GM12878 (cell line): ENCODE measurements at regions of chr5 and their contacts with region 1.

Region 1: DNA sequence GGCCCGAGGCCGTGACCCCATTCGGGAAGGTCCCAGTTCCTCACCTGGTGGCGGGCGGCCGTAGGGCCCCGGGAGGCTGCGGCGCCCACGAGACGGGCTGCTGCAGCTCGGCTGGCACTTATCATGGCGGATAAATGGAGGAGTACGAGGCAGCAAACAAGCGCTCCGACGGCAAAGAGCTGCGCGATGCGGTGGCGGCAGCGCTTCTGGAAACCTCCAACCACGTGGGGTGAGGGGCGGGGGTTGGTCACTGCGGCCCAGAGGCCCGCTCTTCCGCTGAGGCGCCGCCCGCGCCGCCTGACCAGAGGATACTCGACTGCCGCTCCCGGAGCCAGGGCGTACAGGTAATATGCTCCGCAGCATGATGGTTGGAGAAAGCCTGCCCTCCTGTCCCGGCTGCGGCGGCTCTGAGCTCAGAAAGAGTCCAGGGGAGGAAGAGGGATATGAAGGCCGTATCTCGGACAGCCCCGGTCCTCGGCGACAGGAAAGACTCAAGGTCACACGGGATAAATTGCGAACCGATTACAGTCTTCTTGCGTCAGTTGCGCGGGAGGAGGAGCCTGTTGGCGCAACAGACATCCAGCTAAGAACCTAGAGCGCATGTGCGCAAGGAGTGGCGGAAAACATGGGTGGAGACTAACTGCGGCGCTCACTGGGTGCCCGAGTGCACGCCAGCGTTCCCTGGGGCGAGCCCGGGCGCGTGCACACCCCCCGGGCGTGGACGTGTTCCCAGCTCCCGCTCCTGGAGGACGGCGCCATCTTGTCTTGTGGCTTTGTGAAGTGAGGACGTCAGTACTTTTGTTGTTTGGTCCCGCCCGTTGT is at the start of gene HSPA9:
- DNase-seq: peak; percentile 99
- ATAC-seq: peak; percentile 92
- H3K4me3 ChIP-seq: peak within 1 kb of the TSS; percentile 85
- H3K27ac ChIP-seq: peak within 1 kb of the TSS; percentile 97
- H3K4me1 ChIP-seq: no peaks in the 10 kb centered on the region
- H3K27me3 ChIP-seq: no peaks in the 10 kb centered on the region
- CTCF ChIP-seq: no peak
- EP300 ChIP-seq: no peak; a peak in 1 of 4 replicates
- POLR2A ChIP-seq: peak; percentile 90
- RAD21 ChIP-seq: no peak
- polyA plus RNA-seq, gene HSPA9: 145 to 294 TPM

Region 2: GRCh38 chr5:138352071-138352721 is 223.2 kb before region 1 on chr5 and contains the start of gene KDM3B:
- CTCF ChIA-PET with region 1: interaction called, 10 read pairs
- POLR2A ChIA-PET with region 1: interaction called, 3 read pairs
- RAD21 ChIA-PET with region 1: interaction called, 3 read pairs
- SMC1A ChIA-PET with region 1: no interaction called
- in situ Hi-C with region 1: no loop called
- intact Hi-C with region 1: no loop called
- DNase-seq: peak; percentile 55
- ATAC-seq: peak; percentile 77
- H3K4me3 ChIP-seq: peak within 1 kb of the TSS; percentile 99
- H3K27ac ChIP-seq: peak within 1 kb of the TSS; percentile 93
- H3K4me1 ChIP-seq: peaks cover 3% of the 10 kb centered on the region
- H3K27me3 ChIP-seq: no peaks in the 10 kb centered on the region
- CTCF ChIP-seq: peak; percentile 99 to 100 (median 99)
- EP300 ChIP-seq: no peak
- POLR2A ChIP-seq: no peak
- RAD21 ChIP-seq: peak; percentile 53
- polyA plus RNA-seq, gene KDM3B: 8.5 to 9.6 TPM

Region 3: DNA sequence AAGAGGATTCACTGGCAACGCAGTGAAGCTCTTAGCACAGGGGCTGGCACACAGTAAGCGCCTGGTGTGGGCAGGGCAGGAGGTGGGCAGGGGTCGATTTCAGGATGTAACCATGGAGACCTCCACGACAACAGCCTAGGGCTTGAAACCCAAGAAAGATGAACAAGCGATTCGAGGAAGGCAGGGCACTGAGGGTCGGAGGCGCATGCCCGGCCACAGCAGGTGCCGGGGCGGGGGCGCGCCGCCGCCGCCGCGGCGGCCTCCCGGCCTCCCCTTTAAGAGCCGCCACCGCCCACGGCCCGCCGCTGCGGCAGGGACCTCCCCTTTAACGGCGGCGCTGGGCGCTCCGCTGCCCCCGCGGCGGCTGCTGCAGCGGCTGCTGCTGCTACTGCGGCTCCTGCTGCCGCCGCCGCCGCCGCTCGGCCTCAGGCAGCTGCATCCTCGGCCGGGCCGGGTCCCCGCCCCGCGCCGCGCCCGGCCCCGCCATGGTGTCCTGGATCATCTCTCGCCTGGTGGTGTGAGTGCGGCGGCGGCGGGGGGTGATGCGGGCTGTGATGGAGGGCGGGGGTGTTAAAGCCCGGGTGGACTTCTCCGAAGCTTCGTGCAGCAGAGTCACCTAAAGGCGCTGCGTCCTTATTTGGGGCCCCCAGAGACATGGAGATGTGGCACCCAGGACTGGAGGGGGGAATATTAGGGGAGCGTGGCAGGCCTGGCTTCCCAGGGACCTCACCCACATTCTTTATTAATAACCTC is 136.5 kb before region 1 on chr5 and contains the start of gene REEP2:
- CTCF ChIA-PET with region 1: no interaction called
- POLR2A ChIA-PET with region 1: no interaction called
- RAD21 ChIA-PET with region 1: no interaction called
- SMC1A ChIA-PET with region 1: no interaction called
- in situ Hi-C with region 1: no loop called
- intact Hi-C with region 1: no loop called
- DNase-seq: no peak
- ATAC-seq: peak; percentile 89
- H3K4me3 ChIP-seq: peak within 1 kb of the TSS; percentile 67
- H3K27ac ChIP-seq: no peak within 1 kb of the TSS
- H3K4me1 ChIP-seq: peaks cover 4% of the 10 kb centered on the region
- H3K27me3 ChIP-seq: no peaks in the 10 kb centered on the region
- CTCF ChIP-seq: no peak
- EP300 ChIP-seq: no peak
- POLR2A ChIP-seq: no peak
- RAD21 ChIP-seq: no peak
- polyA plus RNA-seq, gene REEP2: 0.10 to 0.13 TPM

Region 4: GRCh38 chr5:138594305-138595058 is 19.1 kb after region 1 on chr5:
- CTCF ChIA-PET with region 1: interaction called, 17 read pairs
- POLR2A ChIA-PET with region 1: interaction called, 3 read pairs
- RAD21 ChIA-PET with region 1: interaction called, 5 read pairs
- SMC1A ChIA-PET with region 1: interaction called, 4 read pairs
- in situ Hi-C with region 1: no loop called
- intact Hi-C with region 1: no loop called
- DNase-seq: no peak
- ATAC-seq: no peak; the same call in 2 of the 3 replicates
- H3K4me3 ChIP-seq: no peak overlapping the region
- H3K27ac ChIP-seq: no peak overlapping the region
- H3K4me1 ChIP-seq: no peaks in the 10 kb centered on the region
- H3K27me3 ChIP-seq: no peaks in the 10 kb centered on the region
- CTCF ChIP-seq: peak; percentile 4 to 44 (median 35); a peak in 1 of 6 replicates
- EP300 ChIP-seq: no peak
- POLR2A ChIP-seq: no peak
- RAD21 ChIP-seq: no peak

Region 5: GRCh38 chr5:138632900-138633489 is 57.6 kb after region 1 on chr5:
- CTCF ChIA-PET with region 1: interaction called, 16 read pairs
- POLR2A ChIA-PET with region 1: no interaction called
- RAD21 ChIA-PET with region 1: interaction called, 6 read pairs
- SMC1A ChIA-PET with region 1: interaction called, 10 read pairs
- in situ Hi-C with region 1: no loop called
- intact Hi-C with region 1: loop called (anchors 2 kb)
- DNase-seq: peak; percentile 51
- ATAC-seq: peak; percentile 87
- H3K4me3 ChIP-seq: no peak overlapping the region
- H3K27ac ChIP-seq: no peak overlapping the region
- H3K4me1 ChIP-seq: no peaks in the 10 kb centered on the region
- H3K27me3 ChIP-seq: no peaks in the 10 kb centered on the region
- CTCF ChIP-seq: peak; percentile 45 to 60 (median 48); a peak in 5 of 6 replicates
- EP300 ChIP-seq: no peak
- POLR2A ChIP-seq: no peak
- RAD21 ChIP-seq: peak; percentile 47; the same call in 1 of the 2 replicates

Region 6: DNA sequence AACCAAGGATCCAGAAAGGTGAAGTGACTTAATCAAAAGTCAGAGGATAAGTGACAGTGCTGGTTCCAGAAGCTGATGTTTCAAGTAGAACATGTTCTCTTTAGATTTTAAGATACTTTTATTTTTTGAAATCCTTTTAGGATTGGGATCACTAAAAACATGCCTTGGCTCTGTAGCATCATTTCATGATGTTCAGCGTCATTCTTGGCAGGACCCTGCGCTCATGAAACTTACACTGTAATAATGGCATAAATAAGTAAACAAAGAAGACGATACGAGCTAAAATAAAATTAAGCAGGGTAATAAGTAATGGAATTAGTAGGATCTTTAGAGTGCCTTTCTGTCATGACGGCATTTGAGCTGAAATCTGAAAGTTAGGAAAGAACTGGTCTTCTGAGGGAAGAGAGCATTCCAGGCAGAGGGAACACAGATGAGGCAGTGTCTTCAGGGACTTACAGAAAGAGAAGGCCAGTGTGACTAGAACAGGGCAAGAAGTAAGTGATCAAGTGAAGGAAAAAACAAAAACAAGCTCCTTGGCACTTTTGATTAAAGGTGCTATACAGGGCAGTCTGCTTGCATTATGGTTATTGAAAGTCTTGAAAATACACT is 197.7 kb after region 1 on chr5:
- CTCF ChIA-PET with region 1: interaction called, 12 read pairs
- POLR2A ChIA-PET with region 1: no interaction called
- RAD21 ChIA-PET with region 1: interaction called, 3 read pairs
- SMC1A ChIA-PET with region 1: interaction called, 7 read pairs
- in situ Hi-C with region 1: no loop called
- intact Hi-C with region 1: no loop called
- DNase-seq: no peak
- ATAC-seq: no peak
- H3K4me3 ChIP-seq: no peak overlapping the region
- H3K27ac ChIP-seq: no peak overlapping the region
- H3K4me1 ChIP-seq: no peaks in the 10 kb centered on the region
- H3K27me3 ChIP-seq: no peaks in the 10 kb centered on the region
- CTCF ChIP-seq: no peak
- EP300 ChIP-seq: no peak
- POLR2A ChIP-seq: no peak
- RAD21 ChIP-seq: no peak